Naive thymus-derived CD8-positive, alpha-beta T cell (primary cell): ENCODE measurements at regions of chr3 and their contacts with region 1.

Region 1: GRCh38 chr3:153161138-153161713 is 800 bp upstream of the RAP2B start:
- DNase-seq: peak in 9 of 10 donors; percentile 71 to 96 (median 91)
- ATAC-seq: peak; percentile 78 to 83
- H3K4me3 Mint-ChIP-seq: peak overlapping the region; percentile 96 to 100 (median 99)
- H3K27ac Mint-ChIP-seq: peak overlapping the region; percentile 94 to 98 (median 97)
- H3K4me1 Mint-ChIP-seq: peaks cover 29 to 40% (median 34%) of the 10 kb centered on the region in 4 donors
- H3K27me3 Mint-ChIP-seq: no peaks in the 10 kb centered on the region

Region 2: GRCh38 chr3:153209596-153209995 is 48.4 kb after region 1 on chr3:
- POLR2A ChIA-PET with region 1: interaction called, 10 read pairs
- DNase-seq: no peak
- ATAC-seq: no peak
- H3K4me3 Mint-ChIP-seq: peak overlapping the region in 8 of 10 donors; percentile 44 to 78 (median 66)
- H3K27ac Mint-ChIP-seq: peak overlapping the region in 9 of 10 donors; percentile 20 to 90 (median 74)
- H3K4me1 Mint-ChIP-seq: peaks cover 12 to 41% (median 32%) of the 10 kb centered on the region in 4 donors
- H3K27me3 Mint-ChIP-seq: no peaks in the 10 kb centered on the region

Region 3: GRCh38 chr3:153221748-153222162 is 60.5 kb after region 1 on chr3:
- POLR2A ChIA-PET with region 1: interaction called, 67 read pairs
- DNase-seq: peak; percentile 34 to 89 (median 75)
- ATAC-seq: peak; percentile 96 to 98
- H3K4me3 Mint-ChIP-seq: peak overlapping the region; percentile 67 to 88 (median 79)
- H3K27ac Mint-ChIP-seq: peak overlapping the region; percentile 90 to 98 (median 96)
- H3K4me1 Mint-ChIP-seq: peaks cover 30 to 69% (median 66%) of the 10 kb centered on the region in 4 donors
- H3K27me3 Mint-ChIP-seq: no peaks in the 10 kb centered on the region

Region 4: GRCh38 chr3:153284282-153284938 is 123.2 kb after region 1 on chr3:
- POLR2A ChIA-PET with region 1: interaction called, 43 read pairs
- DNase-seq: peak in 7 of 10 donors; percentile 13 to 51 (median 34)
- ATAC-seq: peak; percentile 88 to 93
- H3K4me3 Mint-ChIP-seq: peak overlapping the region in 8 of 10 donors; percentile 42 to 62 (median 60)
- H3K27ac Mint-ChIP-seq: peak overlapping the region; percentile 11 to 89 (median 80)
- H3K4me1 Mint-ChIP-seq: peaks cover 28 to 45% (median 40%) of the 10 kb centered on the region in 4 donors
- H3K27me3 Mint-ChIP-seq: no peaks in the 10 kb centered on the region

Region 5: GRCh38 chr3:153291056-153291685 is 129.9 kb after region 1 on chr3:
- POLR2A ChIA-PET with region 1: interaction called, 43 read pairs
- DNase-seq: peak in 2 of 10 donors; percentile 13 to 17
- ATAC-seq: peak; percentile 46 to 58
- H3K4me3 Mint-ChIP-seq: no peak overlapping the region
- H3K27ac Mint-ChIP-seq: peak overlapping the region in 2 of 10 donors; percentile 5 to 68
- H3K4me1 Mint-ChIP-seq: peaks cover 24 to 47% (median 42%) of the 10 kb centered on the region in 4 donors
- H3K27me3 Mint-ChIP-seq: no peaks in the 10 kb centered on the region